ENCODE measurements at regions of chr21 and their contacts with region 1.

Region 1: DNA sequence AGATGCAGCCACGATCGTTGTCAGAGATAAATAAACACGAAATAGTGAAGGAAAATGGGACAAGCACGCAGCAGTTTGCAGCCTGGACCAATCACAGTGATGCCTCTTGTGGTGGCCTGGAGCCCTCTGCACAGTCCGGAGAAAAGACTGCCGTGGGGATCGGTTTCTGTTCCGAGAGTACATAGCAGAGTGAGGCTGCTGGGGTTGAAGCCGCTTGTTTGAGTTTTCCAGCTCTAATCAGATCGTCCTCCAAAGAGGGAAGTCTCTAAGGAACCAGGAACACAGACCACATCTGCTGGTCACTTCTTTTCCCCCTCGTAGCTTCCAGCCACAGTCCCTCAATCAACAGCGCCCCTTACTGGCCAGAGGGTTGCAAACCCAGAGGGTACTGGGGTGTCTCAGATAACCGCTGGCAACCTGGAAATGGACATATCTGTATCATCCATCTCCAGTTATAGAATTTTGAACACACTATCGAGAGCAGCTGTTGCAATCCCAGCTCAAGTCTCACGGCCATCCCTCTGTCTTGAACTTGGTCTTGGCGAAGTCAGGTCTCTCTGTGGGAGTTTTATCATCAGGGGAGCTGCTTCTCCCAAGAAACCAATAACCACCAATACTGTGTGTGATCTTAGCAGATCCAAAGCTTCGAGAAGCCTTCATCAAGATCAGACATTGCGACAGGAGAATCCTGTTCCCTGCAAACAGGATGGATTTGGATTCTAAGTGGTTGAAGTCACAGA is 57.4 kb downstream of the OLIG1 start:
- DNase-seq: peak; percentile 83
- ATAC-seq: peak; percentile 90
- H3K4me3 Mint-ChIP-seq: peak overlapping the region; percentile 52
- H3K27ac Mint-ChIP-seq: no peak overlapping the region
- H3K4me1 Mint-ChIP-seq: peaks cover 7% of the 10 kb centered on the region
- H3K27me3 Mint-ChIP-seq: peaks cover 8% of the 10 kb centered on the region

Region 2: GRCh38 chr21:32921632-32922230 is 205.6 kb before region 1 on chr21:
- CTCF ChIA-PET with region 1: interaction called, 7 read pairs
- POLR2A ChIA-PET with region 1: no interaction called
- intact Hi-C with region 1: loop called in 1 of 2 experiments (anchors 1 kb)
- DNase-seq: peak; percentile 72
- ATAC-seq: peak; percentile 51
- H3K4me3 Mint-ChIP-seq: no peak overlapping the region
- H3K27ac Mint-ChIP-seq: no peak overlapping the region
- H3K4me1 Mint-ChIP-seq: no peaks in the 10 kb centered on the region
- H3K27me3 Mint-ChIP-seq: no peaks in the 10 kb centered on the region

Region 3: GRCh38 chr21:32994305-32994704 is 133.0 kb before region 1 on chr21:
- CTCF ChIA-PET with region 1: interaction called, 11 read pairs
- POLR2A ChIA-PET with region 1: no interaction called
- intact Hi-C with region 1: loop called (anchors 1 kb)
- DNase-seq: no peak
- ATAC-seq: no peak
- H3K4me3 Mint-ChIP-seq: no peak overlapping the region
- H3K27ac Mint-ChIP-seq: no peak overlapping the region
- H3K4me1 Mint-ChIP-seq: no peaks in the 10 kb centered on the region
- H3K27me3 Mint-ChIP-seq: peaks cover 8% of the 10 kb centered on the region

Region 4: DNA sequence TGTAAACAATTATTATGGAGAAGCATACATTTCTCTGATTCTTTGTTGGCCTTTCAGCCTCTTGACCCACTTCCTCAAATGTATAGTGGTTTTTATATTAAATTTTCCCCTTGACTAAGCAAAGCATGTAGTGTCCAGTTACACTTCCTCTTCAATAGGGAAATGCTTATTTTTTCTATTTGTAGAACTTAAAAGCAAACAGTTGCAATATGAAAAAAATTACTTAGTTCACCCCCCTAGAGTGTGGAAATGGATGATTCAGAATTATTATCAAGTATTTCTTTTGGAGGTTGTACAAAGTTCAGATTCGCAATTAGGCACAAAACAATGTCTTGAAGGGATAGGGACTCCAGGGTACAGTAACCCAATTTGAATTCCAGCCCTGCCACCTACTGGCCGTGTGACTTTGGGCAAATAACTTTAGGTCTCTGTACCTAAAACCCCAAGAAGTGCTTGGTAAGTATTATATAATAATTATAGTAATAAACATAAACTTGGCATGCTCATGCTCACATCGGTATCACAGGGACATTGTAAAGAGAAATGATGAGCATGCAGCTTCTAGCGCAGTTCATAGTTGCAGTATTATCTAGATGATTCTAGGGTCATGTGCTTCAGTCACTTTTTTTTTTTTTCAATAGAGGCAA is 247.2 kb after region 1 on chr21:
- CTCF ChIA-PET with region 1: no interaction called
- POLR2A ChIA-PET with region 1: no interaction called
- intact Hi-C with region 1: loop called in 1 of 2 experiments (anchors 5 kb)
- DNase-seq: peak; percentile 75
- ATAC-seq: peak; percentile 83
- H3K4me3 Mint-ChIP-seq: no peak overlapping the region
- H3K27ac Mint-ChIP-seq: no peak overlapping the region
- H3K4me1 Mint-ChIP-seq: peaks cover 13% of the 10 kb centered on the region
- H3K27me3 Mint-ChIP-seq: peaks cover 2% of the 10 kb centered on the region

Measured in activated CD4-positive, alpha-beta T cell treated with anti-CD3 and anti-CD28 coated beads for 36 hours (primary cell).